HepG2 (cell line): ENCODE measurements at regions of chr18 and their contacts with region 1.

Region 1: GRCh38 chr18:77254711-77255405 is 5.2 kb downstream of the GALR1 start:
- DNase-seq: no peak
- ATAC-seq: no peak
- H3K4me3 ChIP-seq: no peak overlapping the region
- H3K27ac ChIP-seq: no peak overlapping the region
- H3K4me1 ChIP-seq: no peaks in the 10 kb centered on the region
- H3K27me3 ChIP-seq: peaks cover 1 to 24% of the 10 kb centered on the region in 2 experiments; a peak in 3 of 5 replicates
- CTCF ChIP-seq: no peak
- EP300 ChIP-seq: no peak
- POLR2A ChIP-seq: no peak
- RAD21 ChIP-seq: no peak

Region 2: DNA sequence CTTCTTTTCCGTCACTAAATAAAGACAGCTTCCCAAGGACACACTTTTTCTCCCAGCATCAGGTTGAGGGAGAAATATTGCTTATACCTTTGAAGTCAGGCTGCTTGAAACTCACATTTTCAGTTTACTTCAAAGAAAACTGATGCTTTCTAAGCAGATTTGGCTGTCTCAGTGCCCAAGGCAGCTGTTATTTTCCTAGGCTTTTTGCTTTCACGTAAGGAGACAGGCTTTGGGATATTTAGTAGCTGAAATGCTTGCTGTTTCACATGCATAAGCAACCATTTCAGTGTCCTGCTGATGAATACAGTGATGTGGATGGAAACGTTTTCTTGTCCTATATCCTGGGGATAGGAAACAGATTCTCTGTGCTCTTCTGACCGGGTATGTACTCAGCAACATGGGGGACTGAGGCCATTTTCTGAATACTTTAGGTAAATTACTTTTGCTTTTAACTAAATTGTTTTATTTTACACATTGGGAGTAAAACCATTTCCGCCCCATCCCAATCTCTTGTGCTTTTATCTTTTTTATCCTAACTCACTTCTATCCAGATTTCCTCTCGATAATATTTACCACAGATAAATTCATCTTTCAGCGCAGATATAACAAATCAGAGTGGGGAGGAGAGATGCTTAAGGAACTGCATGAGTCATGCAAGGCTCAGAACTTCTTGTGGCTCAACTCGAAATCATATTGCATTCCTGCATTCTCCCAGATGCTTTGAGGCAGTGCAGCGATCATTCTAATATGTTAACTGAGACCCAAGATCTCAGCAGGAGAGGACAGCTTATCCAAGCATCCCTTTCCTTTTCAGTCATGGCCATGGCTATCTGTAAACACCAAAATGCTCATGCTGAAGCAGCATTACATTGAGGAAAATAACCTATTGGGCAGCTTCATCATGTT is 17.0 kb after region 1 on chr18:
- CTCF ChIA-PET with region 1: no interaction called
- POLR2A ChIA-PET with region 1: no interaction called
- in situ Hi-C with region 1: no loop called
- intact Hi-C with region 1: loop called (anchors 1 kb)
- DNase-seq: no peak
- ATAC-seq: no peak
- H3K4me3 ChIP-seq: no peak overlapping the region
- H3K27ac ChIP-seq: no peak overlapping the region
- H3K4me1 ChIP-seq: no peaks in the 10 kb centered on the region
- H3K27me3 ChIP-seq: no peaks in the 10 kb centered on the region; a peak in 1 of 5 replicates
- CTCF ChIP-seq: no peak
- EP300 ChIP-seq: no peak
- POLR2A ChIP-seq: no peak
- RAD21 ChIP-seq: no peak

Region 3: DNA sequence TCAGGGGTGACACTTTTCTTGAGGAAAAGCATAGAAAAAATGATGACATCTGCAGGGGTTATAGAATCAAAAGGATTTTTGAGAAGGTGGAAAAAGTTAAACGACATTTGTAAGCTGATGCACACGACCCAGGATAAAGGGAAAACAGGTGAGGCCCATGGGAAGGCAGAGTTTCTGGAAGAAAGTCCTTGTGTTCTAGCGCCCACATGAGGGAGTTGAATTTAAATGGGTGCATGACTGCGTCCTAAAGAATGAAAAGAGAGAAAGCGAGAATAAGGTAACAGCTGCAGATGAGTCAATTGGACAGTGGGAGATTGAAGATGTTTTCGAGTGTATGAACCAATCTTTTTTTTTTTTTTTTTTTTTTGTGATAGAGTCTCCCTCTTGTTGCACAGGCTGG is 152.9 kb after region 1 on chr18:
- CTCF ChIA-PET with region 1: no interaction called
- POLR2A ChIA-PET with region 1: no interaction called
- in situ Hi-C with region 1: no loop called
- intact Hi-C with region 1: no loop called
- DNase-seq: peak; percentile 3
- ATAC-seq: no peak
- H3K4me3 ChIP-seq: no peak overlapping the region
- H3K27ac ChIP-seq: no peak overlapping the region
- H3K4me1 ChIP-seq: no peaks in the 10 kb centered on the region
- H3K27me3 ChIP-seq: peaks cover 1 to 27% of the 10 kb centered on the region in 2 experiments; a peak in 3 of 5 replicates
- CTCF ChIP-seq: 0 out of 2 replicates have a peak, but pooled peaks have one; percentile 27
- EP300 ChIP-seq: no peak
- POLR2A ChIP-seq: no peak
- RAD21 ChIP-seq: no peak